ENCODE measurements at regions of chr15 and their contacts with region 1.

Region 1: GRCh38 chr15:84716036-84716799 is at the start of gene SEC11A:
- H3K4me3 Mint-ChIP-seq: peak within 1 kb of the TSS; percentile 91
- H3K27ac Mint-ChIP-seq: peak within 1 kb of the TSS; percentile 96
- H3K4me1 Mint-ChIP-seq: peaks cover 44% of the 10 kb centered on the region
- H3K27me3 Mint-ChIP-seq: no peaks in the 10 kb centered on the region

Region 2: DNA sequence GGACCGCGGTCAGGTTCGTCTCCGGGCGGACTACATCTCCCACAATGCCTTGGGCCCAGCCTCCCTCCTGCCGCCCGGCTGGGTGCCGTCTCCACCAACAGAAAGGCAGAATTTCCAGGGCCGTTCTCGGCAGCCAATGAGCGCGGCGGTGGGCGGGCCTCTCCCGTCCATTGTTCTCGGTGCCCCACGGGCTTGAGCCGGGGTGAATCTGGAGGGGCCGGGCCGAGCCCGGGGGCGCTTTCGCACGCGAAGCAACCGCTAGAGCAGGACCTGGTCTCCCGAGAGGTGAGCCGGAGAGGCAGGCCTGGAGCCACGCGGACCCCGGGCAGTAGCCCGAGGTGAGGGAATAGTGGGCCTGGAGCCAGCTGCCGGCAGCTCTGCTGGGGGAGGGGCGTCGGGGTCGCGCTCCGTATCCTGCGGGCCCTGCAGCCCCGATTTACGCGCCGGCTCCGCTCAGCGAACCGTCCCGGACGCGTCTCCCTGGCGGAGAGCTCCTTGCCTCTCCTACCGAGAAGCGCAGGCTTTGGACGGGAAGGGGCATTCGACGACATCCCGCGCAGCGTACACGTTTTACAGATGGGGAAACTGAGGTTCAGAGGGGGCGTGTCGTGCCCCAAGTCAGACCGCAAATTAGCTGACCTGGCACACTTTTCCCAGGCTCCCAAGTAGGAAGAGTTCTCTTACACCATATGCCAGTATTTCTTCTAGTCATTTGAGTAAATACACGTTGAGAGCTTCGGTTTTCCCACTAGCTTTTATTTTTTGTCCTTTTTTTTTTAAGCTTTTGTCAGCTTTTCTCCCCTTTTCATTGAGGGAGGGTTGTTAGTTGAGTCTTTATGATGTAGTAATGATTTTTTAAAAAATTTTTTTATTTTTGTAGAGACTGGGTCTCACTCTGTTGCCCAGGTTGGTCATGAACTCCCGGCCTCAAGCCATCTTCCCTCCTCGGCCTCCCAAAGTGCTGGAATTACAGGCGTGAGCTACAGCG is 115.1 kb before region 1 on chr15 and contains the start of gene ZSCAN2:
- intact Hi-C with region 1: loop called (anchors 1 kb)
- H3K4me3 Mint-ChIP-seq: peak within 1 kb of the TSS; percentile 97
- H3K27ac Mint-ChIP-seq: peak within 1 kb of the TSS; percentile 91
- H3K4me1 Mint-ChIP-seq: peaks cover 67% of the 10 kb centered on the region
- H3K27me3 Mint-ChIP-seq: no peaks in the 10 kb centered on the region

Region 3: DNA sequence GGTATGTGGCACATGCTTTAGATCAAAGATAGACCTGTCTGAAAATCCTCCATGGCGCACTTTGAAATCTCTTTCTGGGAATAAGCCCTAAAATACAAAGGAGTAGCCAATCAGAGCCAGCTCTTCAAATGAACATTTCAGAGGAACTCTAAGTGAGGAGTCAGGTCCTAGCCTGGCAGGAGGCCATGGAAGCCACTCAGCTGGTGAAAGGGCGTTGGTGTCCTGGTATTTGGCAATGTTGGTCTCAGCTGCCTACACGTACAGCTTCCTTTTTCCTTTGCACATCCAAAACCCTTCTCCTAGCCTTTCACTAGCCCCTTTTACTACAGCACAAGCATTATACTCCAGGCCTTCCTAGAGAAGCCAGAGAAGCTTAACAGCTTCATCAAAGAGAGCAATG is 67.7 kb before region 1 on chr15:
- intact Hi-C with region 1: no loop called
- H3K4me3 Mint-ChIP-seq: no peak overlapping the region
- H3K27ac Mint-ChIP-seq: peak overlapping the region; percentile 73
- H3K4me1 Mint-ChIP-seq: peaks cover 46% of the 10 kb centered on the region
- H3K27me3 Mint-ChIP-seq: no peaks in the 10 kb centered on the region

Region 4: DNA sequence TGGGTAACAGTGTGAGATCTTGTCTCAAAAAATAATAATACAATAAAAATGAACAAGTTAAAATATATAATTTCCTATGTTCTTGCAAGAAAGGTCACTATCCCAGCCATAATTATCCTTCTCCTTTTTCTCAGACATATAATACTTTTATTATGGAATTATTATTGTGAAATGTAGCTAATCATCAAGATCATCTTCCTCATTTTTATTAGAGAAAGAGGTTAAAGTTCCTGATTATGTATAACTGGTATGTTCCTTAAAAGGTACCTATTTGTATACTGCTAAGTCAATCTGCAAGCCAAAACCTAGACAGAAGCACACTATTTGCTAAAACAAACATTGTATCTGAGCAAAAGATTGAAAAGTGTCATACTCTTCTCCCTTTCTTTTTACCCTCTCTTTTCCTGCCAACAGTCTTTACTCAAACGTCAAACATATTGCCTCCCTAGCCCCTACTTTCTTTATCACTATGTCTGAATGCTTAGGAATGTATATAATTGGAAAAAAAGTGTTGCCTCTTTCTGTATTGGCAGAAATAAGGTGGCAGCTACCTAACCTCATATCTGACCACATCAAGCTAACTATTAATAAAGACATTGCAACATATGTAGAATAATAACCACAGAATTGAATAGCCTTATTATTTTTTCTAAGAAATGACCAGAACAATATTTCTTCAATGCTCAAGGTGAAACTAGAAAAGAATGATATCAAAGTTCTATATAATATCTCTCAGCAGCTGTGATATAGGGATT is 18.8 kb before region 1 on chr15:
- intact Hi-C with region 1: no loop called
- H3K4me3 Mint-ChIP-seq: no peak overlapping the region
- H3K27ac Mint-ChIP-seq: no peak overlapping the region
- H3K4me1 Mint-ChIP-seq: peaks cover 24% of the 10 kb centered on the region
- H3K27me3 Mint-ChIP-seq: no peaks in the 10 kb centered on the region

Region 5: DNA sequence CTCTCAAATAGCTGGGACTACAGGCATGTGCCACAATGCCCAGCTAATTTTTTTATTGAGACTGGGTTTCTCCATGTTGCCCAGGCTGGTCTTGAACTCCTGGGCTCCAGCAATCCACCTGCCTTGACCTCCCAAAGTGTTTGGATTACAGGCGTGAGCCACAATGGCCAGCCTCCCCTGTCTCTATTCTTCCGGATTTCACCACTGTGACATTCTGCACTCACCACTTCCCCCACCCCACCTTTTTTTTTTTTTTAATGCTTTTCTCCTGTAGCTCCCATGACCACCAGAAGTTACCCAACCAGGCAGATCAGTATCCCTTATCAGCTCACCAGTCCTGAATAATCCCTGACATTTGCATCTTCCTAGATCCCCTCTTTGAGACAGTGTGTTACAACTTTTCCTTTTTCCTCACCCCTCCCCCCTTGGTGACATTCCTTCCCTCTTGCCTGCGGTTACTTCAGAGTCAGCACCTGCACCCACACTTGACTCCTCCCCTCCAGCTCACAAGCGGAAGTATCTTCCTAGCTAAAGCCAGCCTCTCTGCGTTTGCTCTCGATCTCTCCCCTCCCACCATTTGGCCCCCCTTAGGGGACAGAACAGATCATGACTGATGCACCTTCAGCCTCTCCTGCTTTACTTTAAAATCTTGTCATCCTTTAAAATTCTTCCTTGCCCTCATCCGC is 18.7 kb after region 1 on chr15:
- intact Hi-C with region 1: loop called (anchors 1 kb)
- H3K4me3 Mint-ChIP-seq: peak overlapping the region; percentile 60
- H3K27ac Mint-ChIP-seq: peak overlapping the region; percentile 90
- H3K4me1 Mint-ChIP-seq: peaks cover 67% of the 10 kb centered on the region
- H3K27me3 Mint-ChIP-seq: no peaks in the 10 kb centered on the region

Region 6: GRCh38 chr15:84748274-84749110 is 32.3 kb after region 1 on chr15 and contains the start of gene ZNF592:
- intact Hi-C with region 1: loop called (anchors 1 kb)
- H3K4me3 Mint-ChIP-seq: peak within 1 kb of the TSS; percentile 97
- H3K27ac Mint-ChIP-seq: peak within 1 kb of the TSS; percentile 98
- H3K4me1 Mint-ChIP-seq: peaks cover 70% of the 10 kb centered on the region
- H3K27me3 Mint-ChIP-seq: no peaks in the 10 kb centered on the region

Measured in dendritic cell treated with granulocyte-macrophage colony-stimulating factor and Interleukin-4, amounts not matched to agents 40 ng/mL and 50 ng/mL, for 4 days (primary cell).